Activated naive CD4-positive, alpha-beta T cell treated with anti-CD3 and anti-CD28 coated beads for 36 hours (primary cell): ENCODE measurements at regions of chr15 and their contacts with region 1.

Region 1: GRCh38 chr15:90742087-90742486 is 24.9 kb downstream of the BLM start:
- DNase-seq: no peak
- H3K4me3 Mint-ChIP-seq: no peak overlapping the region
- H3K27ac Mint-ChIP-seq: no peak overlapping the region
- H3K4me1 Mint-ChIP-seq: peaks cover 43% of the 10 kb centered on the region
- H3K27me3 Mint-ChIP-seq: no peaks in the 10 kb centered on the region

Region 2: GRCh38 chr15:90571063-90571541 is 171.0 kb before region 1 on chr15:
- CTCF ChIA-PET with region 1: no interaction called
- intact Hi-C with region 1: no loop called
- DNase-seq: no peak
- H3K4me3 Mint-ChIP-seq: no peak overlapping the region
- H3K27ac Mint-ChIP-seq: peak overlapping the region; percentile 69
- H3K4me1 Mint-ChIP-seq: peaks cover 85% of the 10 kb centered on the region
- H3K27me3 Mint-ChIP-seq: no peaks in the 10 kb centered on the region

Region 3: GRCh38 chr15:90709278-90709677 is 32.8 kb before region 1 on chr15:
- CTCF ChIA-PET with region 1: no interaction called
- intact Hi-C with region 1: loop called (anchors 1 kb)
- DNase-seq: no peak
- H3K4me3 Mint-ChIP-seq: no peak overlapping the region
- H3K27ac Mint-ChIP-seq: no peak overlapping the region
- H3K4me1 Mint-ChIP-seq: peaks cover 9% of the 10 kb centered on the region
- H3K27me3 Mint-ChIP-seq: no peaks in the 10 kb centered on the region